Right cardiac atrium (tissue), 5 donors: ENCODE measurements at regions of chr11 and their contacts with region 1.

Region 1: DNA sequence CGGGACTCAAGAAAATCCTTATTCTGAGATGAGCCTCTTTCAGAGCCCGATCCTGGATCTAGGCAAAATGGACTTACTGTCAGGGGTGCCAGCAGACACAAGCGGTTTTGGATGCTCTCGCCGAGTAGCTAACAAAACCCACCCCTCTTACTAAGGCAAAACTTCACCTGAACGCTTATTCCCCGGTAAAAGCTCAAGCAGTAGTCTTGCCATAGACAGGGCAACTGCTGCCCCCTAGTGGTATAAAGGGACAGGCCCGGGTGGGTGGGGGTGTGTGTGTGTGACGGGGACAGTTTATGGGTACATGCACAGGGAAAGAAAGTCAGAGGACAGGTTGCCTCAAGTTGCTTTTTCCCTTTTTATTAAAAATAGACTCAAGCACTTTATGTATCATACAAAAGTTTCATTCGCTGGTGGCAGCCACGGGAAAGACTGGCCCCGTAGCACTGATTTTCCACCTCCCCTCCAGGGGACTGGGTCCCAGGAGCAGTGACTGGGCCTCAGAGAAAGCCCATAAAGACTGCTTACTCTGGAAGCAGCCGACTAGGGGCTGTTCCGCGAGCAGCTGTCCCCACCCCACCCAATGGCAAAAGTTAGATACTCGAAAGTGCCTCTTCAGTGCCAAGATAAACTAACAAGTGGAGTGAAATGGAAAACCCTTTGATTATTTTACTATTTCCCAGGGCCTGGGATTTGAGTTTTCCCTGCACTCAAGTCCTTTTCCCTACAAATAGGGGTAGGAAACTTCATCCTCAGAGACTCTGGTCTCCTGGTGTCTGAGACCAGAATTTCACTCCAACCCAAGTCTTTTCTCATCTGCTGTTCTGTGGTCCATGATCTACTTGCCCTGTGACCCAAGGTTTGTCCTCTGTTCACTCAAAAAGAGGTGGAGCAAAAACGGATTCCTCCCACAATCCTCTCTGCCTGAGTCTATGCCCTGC is 4.7 kb downstream of the YPEL4 start:
- DNase-seq: peak; percentile 77 to 92 (median 90)
- ATAC-seq: peak; percentile 76 to 81
- H3K4me3 ChIP-seq: no peak overlapping the region
- H3K27ac ChIP-seq: no peak overlapping the region
- H3K4me1 ChIP-seq: peaks cover 18% of the 10 kb centered on the region
- H3K27me3 ChIP-seq: no peaks in the 10 kb centered on the region

Region 2: GRCh38 chr11:57480409-57481137 is 164.4 kb before region 1 on chr11:
- intact Hi-C with region 1: loop called in 1 of 4 experiments (anchors 10 kb)
- DNase-seq: peak; percentile 65 to 88 (median 88)
- ATAC-seq: peak; percentile 27 to 52
- H3K4me3 ChIP-seq: no peak overlapping the region
- H3K27ac ChIP-seq: no peak overlapping the region
- H3K4me1 ChIP-seq: peaks cover 5% of the 10 kb centered on the region
- H3K27me3 ChIP-seq: no peaks in the 10 kb centered on the region

Region 3: GRCh38 chr11:57567515-57568329 is 77.3 kb before region 1 on chr11 and contains the start of gene UBE2L6:
- intact Hi-C with region 1: loop called in 3 of 4 experiments (anchors 2 to 5 kb)
- DNase-seq: peak; percentile 85 to 96 (median 93)
- ATAC-seq: peak; percentile 86 to 87
- H3K4me3 ChIP-seq: peak within 1 kb of the TSS; percentile 88
- H3K27ac ChIP-seq: peak within 1 kb of the TSS; percentile 66
- H3K4me1 ChIP-seq: peaks cover 6% of the 10 kb centered on the region
- H3K27me3 ChIP-seq: no peaks in the 10 kb centered on the region
- total RNA-seq, gene UBE2L6: 22.6 to 28.8 (median 24.6) TPM

Region 4: GRCh38 chr11:57597916-57598830 is 46.8 kb before region 1 on chr11:
- intact Hi-C with region 1: no loop called
- DNase-seq: peak; percentile 86 to 95 (median 95)
- ATAC-seq: peak; percentile 97
- H3K4me3 ChIP-seq: peak overlapping the region; percentile 80
- H3K27ac ChIP-seq: peak overlapping the region; percentile 76
- H3K4me1 ChIP-seq: no peaks in the 10 kb centered on the region
- H3K27me3 ChIP-seq: no peaks in the 10 kb centered on the region